Heart left ventricle (tissue), 16 donors: ENCODE measurements at regions of chr5 and their contacts with region 1.

Region 1: GRCh38 chr5:94968507-94969095 is 316.3 kb downstream of the MCTP1 start:
- DNase-seq: peak in 1 of 5 donors; percentile 21
- ATAC-seq: peak in 3 of 4 donors; percentile 73 to 80 (median 77)
- H3K4me3 ChIP-seq: no peak overlapping the region
- H3K27ac ChIP-seq: no peak overlapping the region
- H3K4me1 ChIP-seq: peaks cover 0 to 10% (median 0%) of the 10 kb centered on the region in 12 donors
- H3K27me3 ChIP-seq: no peaks in the 10 kb centered on the region
- CTCF ChIP-seq: peak; percentile 58 to 79 (median 69)
- POLR2A ChIP-seq: no peak

Region 2: GRCh38 chr5:95229646-95230045 is 261.0 kb after region 1 on chr5:
- intact Hi-C with region 1: loop called in 1 of 10 experiments (anchors 5 kb)
- DNase-seq: no peak
- ATAC-seq: no peak
- H3K4me3 ChIP-seq: no peak overlapping the region
- H3K27ac ChIP-seq: no peak overlapping the region
- H3K4me1 ChIP-seq: no peaks in the 10 kb centered on the region
- H3K27me3 ChIP-seq: no peaks in the 10 kb centered on the region
- CTCF ChIP-seq: no peak
- POLR2A ChIP-seq: no peak

Region 3: DNA sequence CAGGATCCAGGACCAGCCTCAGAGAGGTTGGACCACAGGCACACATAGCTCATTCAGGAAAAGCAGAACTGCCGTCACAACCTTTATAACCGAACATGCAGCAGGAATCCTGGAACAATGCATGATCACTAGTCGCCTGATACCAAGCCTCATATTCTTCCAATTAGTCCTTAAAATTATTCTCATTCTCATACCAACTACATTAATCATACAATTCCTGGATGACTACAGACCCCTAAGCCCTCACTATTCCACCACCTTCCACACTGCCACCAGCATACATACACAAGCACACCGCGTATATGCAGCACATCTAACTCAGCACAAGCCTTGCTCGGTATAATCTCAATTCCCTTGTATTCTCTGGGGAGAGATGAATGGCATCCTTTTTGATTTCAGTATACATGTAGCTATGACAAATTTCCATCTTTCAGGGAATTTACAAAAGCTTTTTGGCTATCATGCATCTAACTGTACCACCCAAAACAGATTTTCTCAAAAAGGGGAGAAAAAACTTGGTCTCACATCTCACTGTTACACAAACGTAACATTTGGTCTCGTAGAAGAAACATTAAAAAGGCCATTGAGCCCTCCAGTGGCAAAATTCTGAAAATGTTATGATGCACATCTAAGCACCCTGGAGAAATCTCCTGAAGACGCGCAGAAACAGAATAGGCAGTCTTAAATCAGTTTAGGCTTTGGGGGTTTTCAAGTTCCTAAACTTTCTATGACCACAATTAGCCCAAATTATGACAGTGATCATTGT is 270.1 kb after region 1 on chr5:
- intact Hi-C with region 1: loop called (anchors 1 to 5 kb)
- DNase-seq: no peak
- ATAC-seq: no peak
- H3K4me3 ChIP-seq: no peak overlapping the region
- H3K27ac ChIP-seq: no peak overlapping the region
- H3K4me1 ChIP-seq: no peaks in the 10 kb centered on the region
- H3K27me3 ChIP-seq: peaks cover 0 to 9% (median 0%) of the 10 kb centered on the region in 9 donors
- CTCF ChIP-seq: peak in 9 of 12 donors; percentile 21 to 50 (median 34)
- POLR2A ChIP-seq: no peak

Region 4: GRCh38 chr5:95261437-95262175 is 293.0 kb after region 1 on chr5:
- intact Hi-C with region 1: loop called in 2 of 10 experiments (anchors 5 to 10 kb)
- DNase-seq: no peak
- ATAC-seq: peak in 3 of 4 donors; percentile 20 to 69 (median 47)
- H3K4me3 ChIP-seq: no peak overlapping the region
- H3K27ac ChIP-seq: no peak overlapping the region
- H3K4me1 ChIP-seq: peaks cover 0 to 10% (median 0%) of the 10 kb centered on the region in 12 donors
- H3K27me3 ChIP-seq: no peaks in the 10 kb centered on the region
- CTCF ChIP-seq: peak in 9 of 12 donors; percentile 17 to 53 (median 40)
- POLR2A ChIP-seq: no peak